Right ventricle myocardium inferior (tissue), 1 donor: ENCODE measurements at regions of chr5 and their contacts with region 1.

Region 1: DNA sequence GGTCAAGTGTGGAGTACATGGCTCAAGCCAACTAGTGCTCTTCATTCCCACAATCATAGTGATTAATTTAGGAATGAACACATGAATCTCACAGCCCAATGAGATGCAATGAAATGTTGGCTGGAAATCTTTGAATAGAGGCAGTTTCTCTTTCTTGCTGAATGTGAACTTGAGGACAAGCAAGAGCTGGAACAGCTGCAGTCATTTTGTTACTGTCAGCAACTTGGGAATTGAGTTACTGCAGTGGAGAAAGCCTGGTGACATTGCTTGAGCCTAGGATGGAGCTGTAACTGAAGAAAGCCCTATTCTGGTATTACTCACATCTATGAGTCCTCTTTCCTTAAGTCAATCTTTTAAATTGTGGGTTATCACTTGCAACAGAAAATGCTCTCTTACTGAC is 62.3 kb downstream of the YIPF5 start:
- DNase-seq: no peak
- ATAC-seq: no peak

Region 2: GRCh38 chr5:143896966-143897365 is 211.2 kb before region 1 on chr5:
- intact Hi-C with region 1: no loop called
- DNase-seq: no peak
- ATAC-seq: no peak

Region 3: DNA sequence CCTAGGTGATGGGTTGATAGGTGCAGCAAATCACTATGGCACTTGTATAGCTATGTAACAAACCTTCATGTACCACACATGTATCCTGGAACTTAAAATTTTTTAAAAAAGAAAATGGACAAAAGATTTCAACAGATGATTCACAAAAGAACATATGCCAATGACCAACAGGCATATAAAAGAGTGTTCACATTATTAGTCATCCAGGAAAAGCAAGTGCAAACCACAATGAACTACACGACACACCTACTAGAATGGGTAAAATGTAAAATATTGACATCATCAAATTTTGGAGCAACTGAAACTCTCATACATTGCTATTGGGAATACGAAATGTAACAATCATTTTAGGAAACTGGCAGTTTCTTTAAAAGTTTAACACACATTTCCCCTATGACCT is 47.5 kb before region 1 on chr5:
- intact Hi-C with region 1: loop called (anchors 1 kb)
- DNase-seq: no peak
- ATAC-seq: no peak

Region 4: GRCh38 chr5:144142139-144142823 is 34.1 kb after region 1 on chr5:
- intact Hi-C with region 1: no loop called
- DNase-seq: no peak
- ATAC-seq: peak; percentile 44